Heart left ventricle (tissue), 16 donors: ENCODE measurements at regions of chr20 and their contacts with region 1.

Region 1: GRCh38 chr20:9332783-9333479 is 181.5 kb upstream of the LAMP5 start:
- DNase-seq: no peak
- ATAC-seq: no peak
- H3K4me3 ChIP-seq: no peak overlapping the region
- H3K27ac ChIP-seq: no peak overlapping the region
- H3K4me1 ChIP-seq: peaks cover 0 to 24% (median 17%) of the 10 kb centered on the region in 12 donors
- H3K27me3 ChIP-seq: no peaks in the 10 kb centered on the region
- CTCF ChIP-seq: no peak
- POLR2A ChIP-seq: no peak

Region 2: GRCh38 chr20:9280666-9281065 is 52.3 kb before region 1 on chr20:
- intact Hi-C with region 1: loop called in 2 of 10 experiments (anchors 5 to 10 kb)
- DNase-seq: no peak
- ATAC-seq: no peak
- H3K4me3 ChIP-seq: peak overlapping the region in 2 of 12 donors; percentile 4 to 7
- H3K27ac ChIP-seq: peak overlapping the region in 9 of 12 donors; percentile 1 to 61 (median 33)
- H3K4me1 ChIP-seq: peaks cover 0 to 64% (median 34%) of the 10 kb centered on the region in 12 donors
- H3K27me3 ChIP-seq: no peaks in the 10 kb centered on the region
- CTCF ChIP-seq: no peak
- POLR2A ChIP-seq: no peak

Region 3: GRCh38 chr20:9286501-9287461 is 46.1 kb before region 1 on chr20:
- intact Hi-C with region 1: loop called in 2 of 10 experiments (anchors 5 to 10 kb)
- DNase-seq: no peak
- ATAC-seq: no peak
- H3K4me3 ChIP-seq: no peak overlapping the region
- H3K27ac ChIP-seq: no peak overlapping the region
- H3K4me1 ChIP-seq: peaks cover 0 to 37% (median 6%) of the 10 kb centered on the region in 12 donors
- H3K27me3 ChIP-seq: no peaks in the 10 kb centered on the region
- CTCF ChIP-seq: no peak
- POLR2A ChIP-seq: no peak

Region 4: GRCh38 chr20:9723501-9724202 is 390.7 kb after region 1 on chr20:
- intact Hi-C with region 1: no loop called
- DNase-seq: no peak
- ATAC-seq: no peak
- H3K4me3 ChIP-seq: no peak overlapping the region
- H3K27ac ChIP-seq: no peak overlapping the region
- H3K4me1 ChIP-seq: no peaks in the 10 kb centered on the region
- H3K27me3 ChIP-seq: no peaks in the 10 kb centered on the region
- CTCF ChIP-seq: no peak
- POLR2A ChIP-seq: no peak